ENCODE measurements at regions of chr1 and their contacts with region 1.

Region 1: GRCh38 chr1:180188091-180188506 is 33.4 kb downstream of the QSOX1 start:
- DNase-seq: peak; percentile 74
- H3K4me3 Mint-ChIP-seq: no peak overlapping the region
- H3K27ac Mint-ChIP-seq: no peak overlapping the region
- H3K4me1 Mint-ChIP-seq: no peaks in the 10 kb centered on the region
- H3K27me3 Mint-ChIP-seq: no peaks in the 10 kb centered on the region
- CTCF ChIP-seq: peak; percentile 57

Region 2: DNA sequence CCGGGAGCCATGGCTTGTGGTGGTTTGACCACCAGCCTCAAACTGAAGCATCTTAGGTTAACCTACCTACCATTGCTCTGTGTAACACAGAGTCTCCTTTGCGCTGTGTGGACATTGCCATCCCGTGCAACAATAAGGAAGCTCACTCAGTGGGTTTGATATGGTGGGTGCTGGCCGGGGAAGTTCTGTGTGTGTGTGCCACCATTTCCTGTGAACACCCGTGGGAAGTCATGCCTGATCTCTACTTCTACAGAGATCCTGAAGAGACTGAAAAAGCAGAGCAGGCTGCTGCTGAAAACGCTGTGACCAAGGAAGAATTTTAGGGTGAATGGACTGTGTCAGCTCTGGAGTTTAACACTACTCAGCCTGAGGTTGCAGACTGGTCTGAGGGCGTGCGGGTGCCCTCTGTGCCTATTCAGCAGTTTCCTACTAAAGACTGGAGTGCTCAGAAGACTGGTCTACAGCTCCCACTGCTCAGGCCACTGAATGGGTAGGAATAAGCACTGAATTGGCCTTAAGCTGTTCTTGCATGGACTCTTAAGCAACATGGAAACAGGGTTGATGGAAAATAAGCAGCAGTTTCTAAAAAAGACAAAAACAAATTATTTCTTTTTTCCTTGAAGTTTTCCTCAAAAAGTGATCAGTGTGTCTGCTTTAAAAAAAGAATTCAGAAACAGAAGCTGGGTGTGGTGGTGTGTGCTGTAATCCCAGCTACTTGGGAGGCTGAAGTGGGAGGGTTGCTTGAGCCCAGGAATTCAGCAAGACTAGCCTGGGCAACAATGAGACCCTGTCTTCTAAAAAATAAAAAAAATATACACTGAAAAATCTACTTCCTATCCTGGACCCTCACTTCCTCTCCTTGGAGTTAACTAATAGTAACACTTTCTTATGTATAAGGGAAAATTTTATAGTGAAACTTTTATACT is 218.8 kb before region 1 on chr1:
- CTCF ChIA-PET with region 1: no interaction called
- POLR2A ChIA-PET with region 1: no interaction called
- intact Hi-C with region 1: no loop called
- DNase-seq: no peak
- H3K4me3 Mint-ChIP-seq: peak overlapping the region; percentile 13
- H3K27ac Mint-ChIP-seq: peak overlapping the region; percentile 87
- H3K4me1 Mint-ChIP-seq: peaks cover 36% of the 10 kb centered on the region
- H3K27me3 Mint-ChIP-seq: no peaks in the 10 kb centered on the region
- CTCF ChIP-seq: no peak

Region 3: DNA sequence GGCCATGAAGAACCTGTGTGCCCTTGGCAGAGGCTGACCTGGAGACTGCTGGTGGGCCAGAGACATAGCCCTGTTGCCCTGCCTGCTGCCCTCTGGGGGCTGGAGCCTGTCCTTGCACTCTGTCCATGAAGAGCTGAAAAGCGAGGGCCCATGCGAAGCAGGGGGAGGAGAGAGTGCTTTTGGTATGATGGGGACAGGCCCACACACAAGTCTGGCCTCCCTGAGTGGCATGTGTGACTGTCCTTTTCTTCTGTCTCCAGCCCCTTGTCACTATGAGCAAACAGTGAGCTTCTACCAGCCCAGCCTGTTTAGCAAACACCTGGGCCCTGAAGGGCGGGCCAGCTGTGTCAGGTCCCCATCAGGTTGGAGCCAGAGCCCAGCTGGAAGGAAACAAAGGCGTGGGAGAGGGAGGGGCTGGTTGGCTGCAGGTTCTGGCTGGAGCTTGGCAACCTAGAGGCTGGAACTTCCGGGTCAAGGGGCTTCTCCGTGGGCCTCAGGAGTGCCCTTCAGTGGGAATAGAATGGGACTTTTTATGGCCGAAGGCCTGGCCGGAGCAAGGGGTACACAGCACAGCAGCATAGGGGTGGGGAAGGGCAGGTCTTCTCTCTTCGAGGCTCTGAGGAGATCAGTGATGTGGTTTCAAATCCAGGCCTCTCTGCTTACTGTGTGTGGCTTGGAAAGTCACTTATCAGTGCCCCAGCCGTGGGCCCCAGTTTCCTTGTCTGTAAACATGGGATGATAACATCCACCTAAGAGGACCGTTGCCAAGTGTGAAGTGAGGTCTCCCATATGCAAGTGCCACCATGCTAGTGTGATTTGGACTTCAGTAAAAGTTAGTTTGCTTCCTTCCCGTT is 19.1 kb before region 1 on chr1:
- CTCF ChIA-PET with region 1: interaction called, 174 read pairs
- POLR2A ChIA-PET with region 1: no interaction called
- intact Hi-C with region 1: no loop called
- DNase-seq: peak; percentile 69
- H3K4me3 Mint-ChIP-seq: no peak overlapping the region
- H3K27ac Mint-ChIP-seq: peak overlapping the region; percentile 77
- H3K4me1 Mint-ChIP-seq: peaks cover 29% of the 10 kb centered on the region
- H3K27me3 Mint-ChIP-seq: no peaks in the 10 kb centered on the region
- CTCF ChIP-seq: peak; percentile 47

Region 4: GRCh38 chr1:180210008-180210620 is 22.0 kb after region 1 on chr1:
- CTCF ChIA-PET with region 1: interaction called, 20 read pairs
- POLR2A ChIA-PET with region 1: no interaction called
- intact Hi-C with region 1: no loop called
- DNase-seq: peak; percentile 55
- H3K4me3 Mint-ChIP-seq: no peak overlapping the region
- H3K27ac Mint-ChIP-seq: no peak overlapping the region
- H3K4me1 Mint-ChIP-seq: no peaks in the 10 kb centered on the region
- H3K27me3 Mint-ChIP-seq: no peaks in the 10 kb centered on the region
- CTCF ChIP-seq: no peak

Region 5: GRCh38 chr1:180234369-180235076 is 46.4 kb after region 1 on chr1:
- CTCF ChIA-PET with region 1: interaction called, 4 read pairs
- POLR2A ChIA-PET with region 1: no interaction called
- intact Hi-C with region 1: loop called (anchors 5 kb)
- DNase-seq: no peak
- H3K4me3 Mint-ChIP-seq: peak overlapping the region; percentile 19
- H3K27ac Mint-ChIP-seq: no peak overlapping the region
- H3K4me1 Mint-ChIP-seq: no peaks in the 10 kb centered on the region
- H3K27me3 Mint-ChIP-seq: peaks cover 83% of the 10 kb centered on the region
- CTCF ChIP-seq: no peak

Region 6: GRCh38 chr1:180462102-180462501 is 274.0 kb after region 1 on chr1:
- CTCF ChIA-PET with region 1: interaction called, 15 read pairs
- POLR2A ChIA-PET with region 1: no interaction called
- intact Hi-C with region 1: no loop called
- DNase-seq: peak; percentile 8
- H3K4me3 Mint-ChIP-seq: no peak overlapping the region
- H3K27ac Mint-ChIP-seq: no peak overlapping the region
- H3K4me1 Mint-ChIP-seq: peaks cover 5% of the 10 kb centered on the region
- H3K27me3 Mint-ChIP-seq: no peaks in the 10 kb centered on the region
- CTCF ChIP-seq: no peak

Measured in MCF 10A (cell line).